HCT116 (cell line): ENCODE measurements at regions of chr2 and their contacts with region 1.

Region 1: GRCh38 chr2:54106631-54107454 is 8.6 kb upstream of the ACYP2 start:
- DNase-seq: peak; percentile 53
- ATAC-seq: peak; percentile 80
- H3K4me3 ChIP-seq: 0 out of 4 replicates have a peak overlapping the region, but pooled peaks of 1 of the 2 experiments have one; percentile 13
- H3K27ac ChIP-seq: no peak overlapping the region
- H3K4me1 ChIP-seq: peaks cover 12 to 18% of the 10 kb centered on the region in 2 experiments
- H3K27me3 ChIP-seq: no peaks in the 10 kb centered on the region
- CTCF ChIP-seq: peak; percentile 74 to 81 (median 78); a peak in 5 of 6 replicates
- POLR2A ChIP-seq: no peak
- RAD21 ChIP-seq: peak; percentile 88

Region 2: GRCh38 chr2:53515435-53516332 is 591.2 kb before region 1 on chr2:
- CTCF ChIA-PET with region 1: no interaction called
- POLR2A ChIA-PET with region 1: no interaction called
- RAD21 ChIA-PET with region 1: no interaction called
- intact Hi-C with region 1: no loop called
- DNase-seq: no peak
- ATAC-seq: peak; percentile 80
- H3K4me3 ChIP-seq: no peak overlapping the region
- H3K27ac ChIP-seq: no peak overlapping the region
- H3K4me1 ChIP-seq: no peaks in the 10 kb centered on the region
- H3K27me3 ChIP-seq: no peaks in the 10 kb centered on the region
- CTCF ChIP-seq: peak; percentile 28 to 30 (median 29); a peak in 3 of 6 replicates
- POLR2A ChIP-seq: no peak
- RAD21 ChIP-seq: peak; percentile 71

Region 3: DNA sequence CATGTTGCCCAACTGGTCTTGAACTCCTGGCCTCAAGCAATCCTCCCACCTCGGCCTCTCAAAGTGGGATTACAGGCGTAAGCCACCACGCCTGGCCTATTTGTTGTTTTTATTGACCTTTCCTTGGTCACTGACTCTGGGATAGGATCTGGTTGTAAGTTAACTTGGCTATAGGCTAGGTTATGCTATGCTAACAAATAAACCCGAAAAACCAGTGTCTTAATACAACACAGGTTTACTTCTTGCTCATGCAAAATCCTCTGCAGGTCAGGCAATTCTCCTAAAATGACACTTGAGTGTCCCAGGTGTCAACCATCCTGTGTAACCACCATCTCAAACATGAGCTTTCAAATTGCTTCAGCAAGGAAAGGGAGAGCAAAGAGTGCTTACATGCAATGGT is 418.8 kb before region 1 on chr2:
- CTCF ChIA-PET with region 1: no interaction called
- POLR2A ChIA-PET with region 1: no interaction called
- RAD21 ChIA-PET with region 1: no interaction called
- intact Hi-C with region 1: no loop called
- DNase-seq: no peak
- ATAC-seq: no peak
- H3K4me3 ChIP-seq: no peak overlapping the region
- H3K27ac ChIP-seq: no peak overlapping the region
- H3K4me1 ChIP-seq: no peaks in the 10 kb centered on the region
- H3K27me3 ChIP-seq: no peaks in the 10 kb centered on the region
- CTCF ChIP-seq: no peak
- POLR2A ChIP-seq: no peak
- RAD21 ChIP-seq: no peak

Region 4: DNA sequence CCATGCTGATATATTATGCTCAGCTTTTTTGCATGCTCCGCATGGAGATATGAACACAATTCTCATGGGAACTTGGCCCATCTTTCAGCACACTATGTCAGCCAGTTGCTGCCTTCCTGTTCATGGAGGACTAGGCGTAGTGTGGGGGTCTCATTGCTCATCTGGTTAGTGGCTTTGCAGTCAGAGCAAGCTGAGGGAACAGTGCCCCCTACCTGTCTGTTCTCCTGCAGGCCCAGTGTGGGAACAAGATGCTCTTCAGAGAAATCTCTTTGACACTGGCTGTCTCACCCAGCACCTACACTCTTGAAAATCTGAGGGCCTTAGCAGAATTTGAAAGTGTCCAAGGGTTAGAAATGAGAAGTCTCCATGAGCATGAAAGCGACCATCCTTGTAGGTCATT is 396.3 kb after region 1 on chr2:
- CTCF ChIA-PET with region 1: interaction called, 15 read pairs
- POLR2A ChIA-PET with region 1: no interaction called
- RAD21 ChIA-PET with region 1: no interaction called
- intact Hi-C with region 1: loop called (anchors 1 kb)
- DNase-seq: no peak
- ATAC-seq: peak; percentile 82
- H3K4me3 ChIP-seq: no peak overlapping the region
- H3K27ac ChIP-seq: no peak overlapping the region
- H3K4me1 ChIP-seq: no peaks in the 10 kb centered on the region
- H3K27me3 ChIP-seq: no peaks in the 10 kb centered on the region
- CTCF ChIP-seq: peak; percentile 67 to 83 (median 75)
- POLR2A ChIP-seq: no peak
- RAD21 ChIP-seq: peak; percentile 86

Region 5: GRCh38 chr2:54624591-54625071 is 517.8 kb after region 1 on chr2:
- CTCF ChIA-PET with region 1: interaction called, 3 read pairs
- POLR2A ChIA-PET with region 1: no interaction called
- RAD21 ChIA-PET with region 1: no interaction called
- intact Hi-C with region 1: loop called (anchors 5 kb)
- DNase-seq: no peak
- ATAC-seq: no peak
- H3K4me3 ChIP-seq: no peak overlapping the region
- H3K27ac ChIP-seq: no peak overlapping the region
- H3K4me1 ChIP-seq: no peaks in the 10 kb centered on the region
- H3K27me3 ChIP-seq: no peaks in the 10 kb centered on the region
- CTCF ChIP-seq: no peak
- POLR2A ChIP-seq: no peak
- RAD21 ChIP-seq: no peak

Region 6: DNA sequence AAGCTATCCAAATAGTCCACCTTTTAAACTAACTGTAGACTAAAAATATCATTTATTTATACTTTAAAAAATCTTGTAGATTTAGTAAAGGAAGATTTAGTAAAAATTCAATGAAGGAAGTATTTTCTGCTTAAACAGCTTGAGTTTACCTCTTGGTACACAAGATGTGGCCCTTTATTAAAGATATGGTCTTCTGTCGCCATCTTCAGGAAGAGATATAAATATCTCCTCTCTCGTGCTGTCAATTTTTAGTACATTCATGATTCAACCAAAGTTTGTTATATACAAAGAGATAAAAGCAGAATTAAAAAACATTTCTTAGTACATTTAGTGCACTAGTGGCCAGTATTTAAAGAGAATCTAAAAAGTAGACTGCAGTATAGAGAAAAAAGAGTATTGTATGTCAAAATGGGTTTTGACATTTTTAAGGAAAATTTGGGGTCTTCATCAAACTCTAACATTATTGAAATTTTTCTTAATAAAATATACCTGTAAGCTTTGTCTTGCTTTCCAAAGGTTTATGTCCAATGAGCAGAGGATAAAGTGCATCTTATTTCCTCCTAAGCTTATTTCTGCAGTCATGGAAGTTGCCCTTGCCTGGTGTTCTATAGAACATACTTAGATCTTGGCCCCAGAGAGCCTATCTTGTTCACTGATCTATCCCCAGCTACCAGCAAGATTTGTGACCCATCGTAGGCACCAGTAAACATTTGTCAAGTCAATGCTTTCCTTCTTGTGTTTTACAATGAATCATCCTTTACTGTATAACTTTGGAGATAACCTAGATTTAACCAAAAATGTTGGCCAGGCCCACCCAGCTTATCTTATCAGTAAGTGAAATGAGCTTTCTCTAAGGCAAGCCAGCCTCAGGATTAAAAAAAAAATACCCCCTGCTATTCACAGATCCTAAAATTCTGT is 598.1 kb after region 1 on chr2:
- CTCF ChIA-PET with region 1: interaction called, 58 read pairs
- POLR2A ChIA-PET with region 1: no interaction called
- RAD21 ChIA-PET with region 1: interaction called, 9 read pairs
- intact Hi-C with region 1: loop called (anchors 1 kb)
- DNase-seq: peak; percentile 42
- ATAC-seq: peak; percentile 82
- H3K4me3 ChIP-seq: no peak overlapping the region
- H3K27ac ChIP-seq: no peak overlapping the region
- H3K4me1 ChIP-seq: no peaks in the 10 kb centered on the region
- H3K27me3 ChIP-seq: no peaks in the 10 kb centered on the region
- CTCF ChIP-seq: peak; percentile 33 to 78 (median 69); a peak in 5 of 6 replicates
- POLR2A ChIP-seq: no peak
- RAD21 ChIP-seq: peak; percentile 84

Region 7: GRCh38 chr2:55175254-55176025 is 1068.6 kb after region 1 on chr2:
- CTCF ChIA-PET with region 1: interaction called, 3 read pairs
- POLR2A ChIA-PET with region 1: no interaction called
- RAD21 ChIA-PET with region 1: no interaction called
- intact Hi-C with region 1: loop called (anchors 10 kb)
- DNase-seq: peak; percentile 37
- ATAC-seq: peak; percentile 81
- H3K4me3 ChIP-seq: no peak overlapping the region
- H3K27ac ChIP-seq: no peak overlapping the region
- H3K4me1 ChIP-seq: no peaks in the 10 kb centered on the region; a peak in 1 of 4 replicates
- H3K27me3 ChIP-seq: no peaks in the 10 kb centered on the region
- CTCF ChIP-seq: peak; percentile 34 to 69 (median 66); a peak in 4 of 6 replicates
- POLR2A ChIP-seq: no peak
- RAD21 ChIP-seq: peak; percentile 90